Dorsolateral prefrontal cortex (tissue), 120 donors: ENCODE measurements at regions of chr1 and their contacts with region 1.

Region 1: DNA sequence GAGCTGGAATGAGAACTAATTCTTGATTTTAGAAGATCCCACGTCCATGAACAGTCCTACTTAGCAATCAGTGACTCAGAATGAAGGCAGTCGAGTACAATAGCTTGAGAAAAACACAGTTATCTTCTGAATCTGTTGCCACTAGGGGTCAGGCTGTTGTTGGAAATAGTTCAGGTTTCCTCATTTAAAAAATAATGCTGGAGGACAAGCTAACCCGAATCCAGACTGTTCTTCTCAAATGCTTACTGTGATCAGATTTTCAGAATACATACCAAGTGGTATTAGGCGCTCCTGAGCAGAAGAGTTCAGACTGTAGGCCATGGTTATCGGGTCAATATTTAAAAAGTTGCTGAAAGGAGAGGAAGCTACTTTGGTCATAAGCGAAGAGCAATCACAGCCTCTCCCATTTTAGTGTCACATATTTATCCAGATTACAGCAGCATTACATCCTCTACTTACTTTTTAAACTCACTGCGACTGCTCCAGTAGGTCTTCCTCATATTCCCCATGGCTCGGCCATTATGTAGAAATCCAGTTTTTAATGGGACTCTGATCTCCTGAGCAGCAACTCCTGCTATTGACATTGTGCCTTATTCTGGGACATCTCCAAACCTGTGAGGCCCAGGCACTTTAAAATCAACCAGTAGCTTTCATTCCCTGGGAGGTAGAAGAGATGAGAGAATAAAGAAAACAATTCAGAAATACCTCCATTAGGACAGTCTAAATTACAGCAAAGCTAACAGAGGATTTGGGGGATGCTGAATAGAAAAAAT is 10.9 kb downstream of the ERRFI1 start:
- DNase-seq: peak in 2 of 10 donors; percentile 49 to 51
- H3K4me3 ChIP-seq: peak overlapping the region in 20 of 59 donors; percentile 2 to 34 (median 12)
- H3K27ac ChIP-seq: peak overlapping the region in 58 of 59 donors; percentile 40 to 93 (median 82)
- H3K27me3 ChIP-seq: no peaks in the 10 kb centered on the region
- CTCF ChIP-seq: peak; percentile 62 to 91 (median 80)

Region 2: DNA sequence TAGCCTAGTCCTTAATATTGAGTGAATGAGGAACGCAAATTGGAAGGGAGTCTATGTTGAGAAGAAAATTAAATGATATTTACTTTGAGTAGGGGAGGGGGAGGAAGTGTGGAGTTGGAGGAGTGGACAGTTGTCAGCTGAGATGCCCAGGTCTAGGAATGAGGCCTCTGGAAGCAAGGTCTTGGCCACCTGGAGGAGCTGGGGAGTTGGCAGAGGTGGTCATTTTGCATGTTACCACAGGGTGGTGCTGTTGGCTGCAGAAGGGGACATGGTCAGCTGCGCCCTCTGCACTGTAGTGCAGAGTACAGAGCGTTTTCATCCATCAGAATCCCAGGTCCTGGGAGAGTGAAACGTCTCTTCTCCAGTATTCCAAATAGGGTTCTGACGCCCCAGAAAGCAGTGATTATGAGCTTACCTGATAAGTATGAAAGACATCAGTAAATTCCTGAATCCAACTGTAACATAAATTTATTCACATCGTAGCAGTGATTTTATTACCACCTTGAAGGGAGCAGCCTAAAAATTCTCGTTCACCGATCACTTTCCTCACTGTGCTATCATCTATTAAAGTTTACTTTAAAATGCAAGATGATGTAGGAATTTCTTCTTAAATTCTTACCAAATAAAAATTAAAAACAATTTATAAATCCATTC is 39.9 kb before region 1 on chr1:
- intact Hi-C with region 1: loop called (anchors 5 kb)
- DNase-seq: peak in 9 of 10 donors; percentile 45 to 87 (median 66)
- H3K4me3 ChIP-seq: no peak overlapping the region
- H3K27ac ChIP-seq: peak overlapping the region in 35 of 59 donors; percentile 3 to 68 (median 28)
- H3K27me3 ChIP-seq: no peaks in the 10 kb centered on the region
- CTCF ChIP-seq: peak; percentile 63 to 95 (median 86)

Region 3: DNA sequence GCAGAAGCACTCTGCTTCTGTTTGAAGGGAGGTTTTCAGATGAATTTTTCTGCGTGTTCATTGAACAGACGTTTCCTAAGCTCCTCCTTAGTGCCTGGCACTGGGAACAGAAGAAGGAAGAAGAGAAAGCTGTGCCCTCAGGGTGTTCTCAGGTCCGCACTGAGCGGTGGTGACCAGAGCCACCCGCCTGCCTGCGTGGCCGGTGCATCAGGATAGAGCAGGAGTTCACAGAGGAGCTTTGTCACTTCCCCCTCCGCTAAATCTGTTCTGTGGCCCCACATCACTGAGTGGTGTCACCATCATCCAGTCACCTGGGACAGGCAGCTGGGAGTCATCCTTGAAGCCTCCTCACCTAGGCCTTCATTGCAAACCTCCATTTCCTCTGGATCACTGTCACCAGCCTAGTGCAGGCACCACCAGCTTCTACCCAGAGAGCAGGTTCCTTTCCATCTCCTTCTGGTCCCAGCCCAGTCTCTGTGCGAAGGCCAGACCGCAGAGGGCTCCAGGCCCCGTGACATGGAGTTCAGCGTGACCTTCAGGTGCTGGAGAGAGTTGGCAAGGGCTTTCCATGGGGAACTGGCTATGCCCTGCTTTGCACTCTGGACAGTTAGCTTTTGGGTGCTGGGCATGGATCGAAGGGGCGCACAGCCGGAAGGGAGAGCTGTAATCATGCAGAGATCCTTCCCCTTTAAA is 32.0 kb before region 1 on chr1:
- intact Hi-C with region 1: loop called (anchors 5 kb)
- DNase-seq: no peak
- H3K4me3 ChIP-seq: no peak overlapping the region
- H3K27ac ChIP-seq: peak overlapping the region in 10 of 59 donors; percentile 4 to 53 (median 22)
- H3K27me3 ChIP-seq: no peaks in the 10 kb centered on the region
- CTCF ChIP-seq: no peak